Activated B cell treated with CpG ODN at 0.5 μM for 24 hours (primary cell): ENCODE measurements at regions of chr10 and their contacts with region 1.

Region 1: DNA sequence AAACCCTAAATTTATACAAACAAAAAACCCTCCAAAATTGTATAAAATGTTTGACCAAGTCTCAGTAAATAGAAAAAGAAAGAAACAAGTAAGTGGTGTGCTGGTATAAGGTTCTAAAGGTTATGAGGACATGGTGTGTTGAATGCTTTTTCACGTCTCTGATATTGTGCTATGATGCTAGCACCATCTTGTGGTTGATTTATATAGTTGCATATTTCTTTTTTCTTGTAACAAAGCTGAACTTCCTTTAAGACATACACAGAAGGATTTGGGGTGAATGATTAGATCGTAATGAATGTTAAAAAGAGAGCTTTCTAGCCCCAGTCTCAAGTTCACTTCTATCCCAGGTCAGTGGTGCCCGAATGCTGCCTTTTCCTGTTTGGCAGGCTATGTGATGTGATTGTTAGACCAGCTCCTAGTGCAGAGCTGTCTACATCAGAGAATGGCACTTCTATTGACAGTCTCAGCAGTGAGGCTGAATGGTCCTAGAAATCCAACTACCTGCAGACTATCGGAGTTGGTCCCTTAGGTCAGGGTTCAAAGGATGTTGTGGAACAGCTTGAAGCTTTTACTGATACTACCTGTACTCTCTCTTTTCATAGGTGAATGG is 25.0 kb downstream of the VTI1A start:
- DNase-seq: no peak
- ATAC-seq: peak; percentile 52
- H3K4me3 Mint-ChIP-seq: no peak overlapping the region
- H3K27ac Mint-ChIP-seq: no peak overlapping the region
- H3K4me1 Mint-ChIP-seq: peaks cover 4% of the 10 kb centered on the region
- H3K27me3 Mint-ChIP-seq: no peaks in the 10 kb centered on the region
- CTCF ChIP-seq: peak; percentile 63

Region 2: DNA sequence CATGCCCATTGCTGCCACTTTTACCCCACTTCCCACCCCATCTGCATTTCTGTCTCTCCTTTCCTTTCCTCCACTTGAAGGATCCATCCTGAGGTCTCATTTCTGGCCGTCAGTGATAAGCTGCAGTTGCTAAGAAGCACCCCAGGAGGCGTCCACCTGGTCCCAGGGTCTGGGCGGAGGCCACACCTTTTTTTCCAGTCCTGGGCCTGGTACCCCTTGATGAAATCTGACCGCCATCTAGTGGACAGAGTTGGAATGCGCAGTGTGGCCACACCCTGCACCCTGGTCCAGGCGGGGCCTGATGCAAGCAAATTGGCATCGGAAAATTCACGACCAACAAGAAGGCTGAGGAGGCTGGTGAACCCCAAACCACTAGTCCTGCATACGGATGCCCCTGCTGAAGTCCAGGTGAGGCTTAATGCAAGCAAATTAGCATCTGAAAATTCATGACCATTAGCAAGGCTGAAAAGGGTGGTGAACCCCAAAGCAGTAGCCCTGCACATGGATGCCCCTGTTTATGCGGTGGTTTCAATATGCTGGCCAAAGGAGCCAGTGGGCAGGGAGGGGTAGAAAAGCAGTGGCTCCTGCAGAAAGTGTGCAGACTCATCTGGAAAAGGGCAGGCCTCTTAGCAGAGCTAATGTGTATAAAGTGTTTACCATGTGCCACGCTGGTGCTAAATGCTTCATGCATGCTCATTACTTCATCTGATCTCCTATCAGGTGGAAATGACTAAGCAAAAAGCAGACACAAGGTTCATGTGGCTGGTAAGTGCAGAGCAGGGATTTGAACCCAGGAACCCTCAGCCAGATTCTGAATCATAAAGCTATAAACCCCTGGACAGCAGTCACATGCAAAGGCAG is 331.6 kb before region 1 on chr10:
- CTCF ChIA-PET with region 1: interaction called, 3 read pairs
- POLR2A ChIA-PET with region 1: no interaction called
- intact Hi-C with region 1: loop called (anchors 5 kb)
- DNase-seq: peak; percentile 53
- ATAC-seq: peak; percentile 99
- H3K4me3 Mint-ChIP-seq: no peak overlapping the region
- H3K27ac Mint-ChIP-seq: no peak overlapping the region
- H3K4me1 Mint-ChIP-seq: peaks cover 3% of the 10 kb centered on the region
- H3K27me3 Mint-ChIP-seq: no peaks in the 10 kb centered on the region
- CTCF ChIP-seq: peak; percentile 61

Region 3: GRCh38 chr10:112446855-112447711 is 24.9 kb before region 1 on chr10 and contains the starts of genes VTI1A and ZDHHC6:
- CTCF ChIA-PET with region 1: interaction called, 7 read pairs
- POLR2A ChIA-PET with region 1: interaction called, 4 read pairs
- intact Hi-C with region 1: loop called (anchors 2 kb)
- DNase-seq: peak; percentile 81
- ATAC-seq: peak; percentile 88
- H3K4me3 Mint-ChIP-seq: peak within 1 kb of the TSS; percentile 89
- H3K27ac Mint-ChIP-seq: peak within 1 kb of the TSS; percentile 90
- H3K4me1 Mint-ChIP-seq: peaks cover 44% of the 10 kb centered on the region
- H3K27me3 Mint-ChIP-seq: no peaks in the 10 kb centered on the region
- CTCF ChIP-seq: no peak
- total RNA-seq, gene VTI1A: 56.9 and 74.0 TPM in 2 replicates
- total RNA-seq, gene ZDHHC6: 37.1 and 44.5 TPM in 2 replicates

Region 4: DNA sequence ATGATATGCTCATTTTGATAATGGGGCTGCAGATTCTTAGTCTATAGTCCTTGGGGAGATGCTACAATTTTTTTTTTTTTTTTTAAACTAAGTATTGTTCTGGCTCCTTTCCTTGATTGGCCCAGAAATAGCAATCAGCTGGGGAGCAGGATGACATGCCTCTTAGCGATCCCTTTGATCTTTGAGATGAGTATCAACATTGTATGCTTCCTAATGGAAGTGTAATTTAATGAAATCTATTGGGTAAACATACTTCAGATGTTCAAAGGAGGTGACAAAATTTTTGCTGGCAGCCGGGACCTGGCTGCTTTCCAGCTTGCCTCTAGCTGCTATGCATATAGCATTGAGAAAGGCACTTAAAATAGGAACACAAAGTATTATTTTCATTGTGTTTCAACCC is 18.6 kb after region 1 on chr10:
- CTCF ChIA-PET with region 1: interaction called, 15 read pairs
- POLR2A ChIA-PET with region 1: no interaction called
- intact Hi-C with region 1: no loop called
- DNase-seq: no peak
- ATAC-seq: no peak
- H3K4me3 Mint-ChIP-seq: no peak overlapping the region
- H3K27ac Mint-ChIP-seq: no peak overlapping the region
- H3K4me1 Mint-ChIP-seq: no peaks in the 10 kb centered on the region
- H3K27me3 Mint-ChIP-seq: no peaks in the 10 kb centered on the region
- CTCF ChIP-seq: no peak

Region 5: DNA sequence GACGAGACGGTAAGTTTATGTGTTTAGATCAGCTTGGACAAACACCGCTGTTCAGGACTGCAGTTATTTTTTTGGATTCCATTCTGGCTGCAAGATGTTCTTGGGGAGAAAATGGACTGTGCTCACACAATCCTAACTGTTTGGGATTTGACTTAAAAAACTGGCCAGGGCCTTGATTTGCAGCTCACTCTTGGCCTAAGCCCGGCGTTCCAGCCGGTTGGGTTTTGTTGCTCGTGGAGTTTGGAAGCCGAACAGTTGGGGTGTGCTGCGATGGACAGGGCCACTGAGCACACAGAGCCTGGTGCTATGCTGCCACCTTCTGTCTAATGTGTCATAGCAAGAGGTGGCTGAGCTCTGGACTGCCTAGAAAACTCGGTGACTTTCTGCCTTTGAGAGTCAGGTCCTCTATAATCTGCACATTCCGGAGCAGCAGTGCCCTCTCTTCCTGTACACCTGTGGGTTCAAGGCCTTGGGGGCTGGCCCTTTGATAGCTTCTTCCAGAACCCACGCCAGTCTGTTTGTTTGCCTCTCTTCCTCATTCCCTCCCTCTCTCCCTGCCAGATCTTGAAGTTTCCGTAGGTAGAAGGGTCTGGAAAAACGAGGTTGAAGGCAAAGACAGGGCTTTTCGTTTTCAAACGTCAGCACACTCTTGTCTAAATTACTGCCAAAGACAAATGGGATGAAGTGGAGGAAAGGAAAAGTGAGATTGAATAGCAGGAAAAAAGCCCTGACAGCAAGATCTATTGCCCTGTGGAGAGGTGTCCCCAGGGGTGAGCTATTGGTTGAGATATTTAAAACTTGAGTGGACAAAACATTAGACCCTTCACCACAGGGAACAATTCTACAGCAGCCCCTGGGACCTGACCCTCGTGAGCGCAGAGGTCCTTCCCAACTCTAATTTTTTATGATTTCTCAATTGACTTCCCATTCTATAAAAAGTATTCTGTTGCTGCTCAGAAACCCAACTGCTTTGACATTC is 913.3 kb after region 1 on chr10:
- CTCF ChIA-PET with region 1: interaction called, 11 read pairs
- POLR2A ChIA-PET with region 1: no interaction called
- intact Hi-C with region 1: loop called (anchors 1 kb)
- DNase-seq: no peak
- ATAC-seq: peak; percentile 77
- H3K4me3 Mint-ChIP-seq: no peak overlapping the region
- H3K27ac Mint-ChIP-seq: no peak overlapping the region
- H3K4me1 Mint-ChIP-seq: peaks cover 15% of the 10 kb centered on the region
- H3K27me3 Mint-ChIP-seq: peaks cover 22% of the 10 kb centered on the region
- CTCF ChIP-seq: no peak

Region 6: DNA sequence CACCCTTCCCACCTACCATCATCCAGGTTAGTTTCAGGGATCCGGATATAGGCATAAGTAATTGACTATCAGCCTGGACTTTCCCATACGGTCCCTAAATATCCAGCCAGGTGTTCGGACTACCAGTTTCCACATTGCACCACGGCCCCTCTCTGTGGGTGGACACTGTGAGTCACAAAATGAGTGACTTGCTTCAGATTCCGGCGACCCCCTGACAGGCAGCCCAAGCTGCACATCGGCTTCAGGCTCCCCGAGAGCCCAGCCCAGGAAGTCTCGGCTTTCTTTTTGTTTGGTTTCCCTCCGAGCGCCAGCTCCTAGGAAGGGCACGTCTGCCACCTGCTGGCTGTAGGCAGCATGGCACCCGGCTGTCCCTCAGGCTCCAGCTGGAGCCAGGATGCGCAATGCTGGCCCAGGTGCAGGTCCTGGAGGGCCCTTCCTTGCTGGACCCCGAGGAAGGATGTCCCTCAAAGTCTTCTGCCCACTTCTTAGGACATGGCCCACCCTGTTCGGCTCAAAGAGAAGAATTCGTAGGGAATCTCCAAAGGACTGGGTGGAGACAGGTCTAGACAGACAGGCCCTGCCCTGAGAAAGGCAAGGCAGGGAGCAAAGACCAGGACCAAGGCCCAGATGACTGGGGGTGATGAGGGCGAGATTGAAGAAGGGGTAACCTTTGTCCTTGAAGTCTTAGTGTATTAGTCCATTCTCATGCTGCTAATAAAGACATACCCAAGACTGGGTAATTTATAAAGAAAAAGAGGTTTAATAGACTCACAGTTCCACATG is 1091.5 kb after region 1 on chr10:
- CTCF ChIA-PET with region 1: no interaction called
- POLR2A ChIA-PET with region 1: no interaction called
- intact Hi-C with region 1: loop called (anchors 1 kb)
- DNase-seq: peak; percentile 50
- ATAC-seq: peak; percentile 77
- H3K4me3 Mint-ChIP-seq: peak overlapping the region; percentile 70
- H3K27ac Mint-ChIP-seq: no peak overlapping the region
- H3K4me1 Mint-ChIP-seq: peaks cover 5% of the 10 kb centered on the region
- H3K27me3 Mint-ChIP-seq: peaks cover 5% of the 10 kb centered on the region
- CTCF ChIP-seq: peak; percentile 56